ENCODE measurements at regions of chr16 and their contacts with region 1.

Region 1: GRCh38 chr16:76963614-76964315 is 227.2 kb upstream of the MON1B start:
- DNase-seq: peak; percentile 89
- H3K4me3 ChIP-seq: peak overlapping the region; percentile 46
- H3K27ac ChIP-seq: peak overlapping the region; percentile 70
- H3K4me1 ChIP-seq: peaks cover 47% of the 10 kb centered on the region
- CTCF ChIP-seq: no peak

Region 2: DNA sequence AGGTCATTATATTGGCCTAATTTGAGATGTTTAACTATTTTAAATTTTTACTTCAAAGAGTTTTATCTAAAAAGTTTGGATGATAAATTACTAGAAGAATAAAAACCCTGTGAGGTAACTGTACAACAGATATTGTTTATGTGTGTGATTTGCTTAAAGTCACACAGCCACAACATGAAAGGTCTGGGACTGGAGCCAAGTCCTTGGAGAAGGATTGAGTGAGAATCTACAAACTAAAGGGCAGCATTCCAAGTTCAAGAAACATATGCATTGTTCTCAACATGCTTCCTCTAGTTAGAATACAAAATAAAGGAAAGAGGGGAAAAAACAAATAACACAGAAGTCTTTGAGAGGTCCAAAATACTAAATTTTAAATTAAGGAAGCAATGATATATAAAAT is 95.7 kb after region 1 on chr16:
- CTCF ChIA-PET with region 1: no interaction called
- POLR2A ChIA-PET with region 1: interaction called, 3 read pairs
- intact Hi-C with region 1: loop called (anchors 5 kb)
- DNase-seq: no peak
- H3K4me3 ChIP-seq: no peak overlapping the region
- H3K27ac ChIP-seq: no peak overlapping the region
- H3K4me1 ChIP-seq: peaks cover 44% of the 10 kb centered on the region
- CTCF ChIP-seq: no peak

Measured in OCI-LY7 (cell line).